ENCODE measurements at regions of chr9 and their contacts with region 1.

Region 1: DNA sequence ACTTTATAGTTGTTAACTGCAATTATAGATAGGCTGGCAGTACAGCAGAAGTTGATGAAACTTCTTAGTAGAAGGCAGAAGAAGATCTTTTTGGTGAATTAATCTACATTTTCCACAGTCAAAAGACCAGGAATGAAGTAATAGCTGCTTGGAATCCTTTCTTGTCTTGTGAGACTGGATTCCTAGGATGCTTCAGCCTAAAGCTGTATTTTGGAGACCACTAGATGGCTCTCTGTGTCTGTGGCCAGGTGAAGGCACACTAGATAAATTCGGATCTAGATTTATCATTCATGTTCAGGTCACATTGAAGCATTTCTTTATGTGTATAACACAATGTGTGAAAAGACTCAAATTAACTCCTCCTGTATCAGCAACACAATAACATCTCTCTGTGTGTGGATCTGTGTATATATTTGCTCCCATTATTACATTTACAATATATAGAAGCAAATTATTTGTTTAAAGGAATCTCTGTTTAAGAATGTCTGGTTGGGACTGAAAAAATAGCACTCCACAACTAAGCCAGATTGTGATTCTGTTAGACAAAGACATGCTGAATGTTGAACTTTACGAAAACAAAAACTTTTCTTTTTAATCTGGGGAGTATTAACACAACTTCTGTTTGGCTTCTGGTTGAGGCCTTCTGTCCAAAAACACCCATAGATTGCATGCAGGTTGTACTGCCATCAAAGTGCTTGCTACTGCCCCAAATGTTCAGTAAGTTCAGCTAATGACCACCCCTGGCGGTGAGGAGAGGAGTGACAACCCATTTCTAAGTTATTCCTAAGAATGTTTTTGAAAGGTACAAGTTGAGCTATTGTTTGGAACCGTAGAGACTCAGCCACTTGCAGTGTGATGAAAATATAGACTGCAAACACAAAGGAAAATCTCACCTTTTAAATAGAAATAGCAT is 10.6 kb downstream of the GRIN3A start:
- DNase-seq: no peak
- H3K4me3 ChIP-seq: no peak overlapping the region
- H3K27ac ChIP-seq: no peak overlapping the region
- H3K4me1 ChIP-seq: no peaks in the 10 kb centered on the region
- H3K27me3 ChIP-seq: no peaks in the 10 kb centered on the region
- CTCF ChIP-seq: peak; percentile 29 to 77 (median 76)
- EP300 ChIP-seq: no peak
- POLR2A ChIP-seq: no peak
- RAD21 ChIP-seq: peak; percentile 79 to 84

Region 2: GRCh38 chr9:101711330-101711941 is 16.4 kb before region 1 on chr9:
- CTCF ChIA-PET with region 1: interaction called, 12 read pairs
- POLR2A ChIA-PET with region 1: no interaction called
- DNase-seq: peak in 1 of 2 experiments; percentile 85
- H3K4me3 ChIP-seq: no peak overlapping the region
- H3K27ac ChIP-seq: no peak overlapping the region
- H3K4me1 ChIP-seq: no peaks in the 10 kb centered on the region; a peak in 2 of 7 replicates
- H3K27me3 ChIP-seq: peaks cover 0 to 2% (median 0%) of the 10 kb centered on the region in 4 experiments; a peak in 1 of 7 replicates
- CTCF ChIP-seq: peak; percentile 59 to 90 (median 76)
- EP300 ChIP-seq: no peak
- POLR2A ChIP-seq: no peak
- RAD21 ChIP-seq: peak; percentile 51 to 58